ENCODE measurements at regions of chr15 and their contacts with region 1.

Region 1: GRCh38 chr15:66851226-66852071 is 149.4 kb downstream of the SMAD6 start:
- DNase-seq: peak; percentile 59 to 61
- ATAC-seq: peak; percentile 85 to 94
- H3K4me3 ChIP-seq: no peak overlapping the region
- H3K27ac ChIP-seq: peak overlapping the region in 1 of 4 donors; percentile 43
- H3K4me1 ChIP-seq: peaks cover 0 to 11% of the 10 kb centered on the region in 2 donors
- H3K27me3 ChIP-seq: no peaks in the 10 kb centered on the region
- CTCF ChIP-seq: peak; percentile 75 to 96 (median 90)
- POLR2A ChIP-seq: no peak

Region 2: GRCh38 chr15:66603301-66604179 is 247.9 kb before region 1 on chr15:
- in situ Hi-C with region 1: loop called in 1 of 4 experiments (anchors 10 kb)
- intact Hi-C with region 1: no loop called
- DNase-seq: no peak
- ATAC-seq: no peak
- H3K4me3 ChIP-seq: no peak overlapping the region
- H3K27ac ChIP-seq: no peak overlapping the region
- H3K4me1 ChIP-seq: no peaks in the 10 kb centered on the region
- H3K27me3 ChIP-seq: peaks cover 0 to 4% (median 0%) of the 10 kb centered on the region in 3 donors
- CTCF ChIP-seq: peak; percentile 34 to 72 (median 63)
- POLR2A ChIP-seq: no peak

Region 3: GRCh38 chr15:66774001-66774814 is 77.2 kb before region 1 on chr15:
- in situ Hi-C with region 1: no loop called
- intact Hi-C with region 1: loop called (anchors 2 kb)
- DNase-seq: peak; percentile 35 to 74
- ATAC-seq: peak; percentile 86 to 90
- H3K4me3 ChIP-seq: no peak overlapping the region
- H3K27ac ChIP-seq: peak overlapping the region in 1 of 4 donors; percentile 5
- H3K4me1 ChIP-seq: peaks cover 0 to 13% of the 10 kb centered on the region in 2 donors
- H3K27me3 ChIP-seq: no peaks in the 10 kb centered on the region
- CTCF ChIP-seq: peak; percentile 92 to 97 (median 96)
- POLR2A ChIP-seq: no peak

Measured in gastrocnemius medialis (tissue), 4 donors.